GM10248 (cell line): ENCODE measurements at regions of chr11 and their contacts with region 1.

Region 1: GRCh38 chr11:83071567-83072349 is at the start of gene RAB30:
- DNase-seq: peak; percentile 94
- CTCF ChIP-seq: no peak

Region 2: GRCh38 chr11:82978422-82979099 is 93.2 kb before region 1 on chr11:
- CTCF ChIA-PET with region 1: no interaction called
- POLR2A ChIA-PET with region 1: no interaction called
- DNase-seq: no peak
- CTCF ChIP-seq: no peak

Region 3: GRCh38 chr11:83035070-83035854 is 36.5 kb before region 1 on chr11:
- CTCF ChIA-PET with region 1: no interaction called
- POLR2A ChIA-PET with region 1: no interaction called
- DNase-seq: no peak
- CTCF ChIP-seq: no peak

Region 4: DNA sequence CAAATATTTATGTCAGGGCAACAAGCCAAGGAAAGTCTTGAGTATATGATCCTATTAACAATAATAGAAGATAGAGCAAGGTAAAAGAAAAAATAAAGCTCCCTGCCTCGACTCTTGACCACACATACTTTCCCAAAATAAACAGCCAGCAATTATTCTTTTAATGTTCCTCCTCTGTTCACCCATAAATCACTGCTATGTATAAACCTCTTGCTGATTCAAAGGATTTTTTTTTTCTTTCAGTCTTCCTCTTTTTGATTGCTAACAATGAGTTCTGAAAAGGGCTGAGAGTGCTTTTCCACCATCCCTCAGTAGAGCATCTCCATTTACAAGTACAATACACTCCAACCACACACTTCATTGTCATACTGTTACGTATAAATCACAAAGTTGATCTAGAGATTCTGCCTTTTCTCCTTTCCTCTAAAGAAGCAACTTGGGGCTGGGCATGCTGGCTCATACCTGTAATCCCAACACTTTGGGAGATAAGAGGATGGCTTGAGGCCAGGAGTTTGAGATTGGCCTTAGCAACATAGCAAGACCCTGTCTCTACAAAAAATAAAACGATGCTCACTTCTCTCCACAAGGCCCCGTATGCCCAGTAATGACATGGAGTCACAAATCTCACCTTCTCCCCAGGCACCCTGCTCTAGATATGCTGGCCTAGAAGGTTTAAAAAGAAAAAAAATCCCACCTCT is 24.1 kb before region 1 on chr11:
- CTCF ChIA-PET with region 1: no interaction called
- POLR2A ChIA-PET with region 1: no interaction called
- DNase-seq: no peak
- CTCF ChIP-seq: no peak

Region 5: GRCh38 chr11:83087035-83087434 is 15.3 kb after region 1 on chr11:
- CTCF ChIA-PET with region 1: interaction called, 45 read pairs
- POLR2A ChIA-PET with region 1: no interaction called
- DNase-seq: no peak
- CTCF ChIP-seq: peak; percentile 11